GM10248 (cell line): ENCODE measurements at regions of chr7 and their contacts with region 1.

Region 1: DNA sequence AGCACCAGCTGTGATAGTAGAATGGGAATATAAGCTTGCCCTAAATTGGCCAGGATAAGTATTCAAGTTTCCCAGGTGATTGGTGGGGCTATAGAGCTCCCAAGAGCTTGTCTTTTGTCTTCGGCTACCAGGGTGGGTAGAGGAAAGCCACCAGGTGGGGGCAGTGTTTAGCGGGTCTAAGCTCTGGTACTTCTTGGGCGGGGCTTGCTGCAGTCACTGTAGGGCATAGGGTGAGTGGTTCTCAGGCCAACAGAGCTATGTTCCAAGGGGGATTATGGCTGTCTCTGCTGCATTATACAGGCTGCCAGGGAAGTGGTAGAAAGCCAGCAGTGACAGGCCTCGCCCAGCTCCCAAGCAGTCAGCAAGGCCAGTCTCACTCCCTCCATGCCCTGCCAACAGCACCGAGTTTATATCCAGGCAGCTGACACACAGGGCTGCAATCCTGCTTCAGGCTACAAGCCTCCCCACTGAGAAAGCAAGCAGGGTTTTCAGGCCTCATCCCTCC is 110.7 kb downstream of the ZNF467 start:
- DNase-seq: peak; percentile 66
- CTCF ChIP-seq: peak; percentile 63

Region 2: DNA sequence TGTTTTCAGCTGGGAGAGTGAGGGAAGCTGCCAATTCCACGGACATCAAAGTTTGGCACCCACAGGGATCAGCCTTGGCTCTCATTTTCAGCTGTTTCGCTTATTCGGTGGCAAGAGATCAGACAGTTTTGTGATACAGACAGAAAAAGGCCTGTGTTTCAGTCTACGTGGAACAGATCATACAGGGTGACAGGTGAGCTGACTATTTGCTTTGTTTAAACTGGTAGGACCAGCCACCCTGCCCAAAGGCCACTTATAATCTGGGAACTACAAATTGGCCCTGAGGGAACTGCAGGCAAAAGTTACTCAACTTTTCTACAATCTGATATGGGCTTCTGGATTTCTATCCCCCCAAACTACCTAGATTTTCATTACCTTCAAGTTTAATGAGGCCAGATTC is 17.9 kb before region 1 on chr7:
- CTCF ChIA-PET with region 1: interaction called, 18 read pairs
- POLR2A ChIA-PET with region 1: no interaction called
- DNase-seq: no peak
- CTCF ChIP-seq: no peak

Region 3: DNA sequence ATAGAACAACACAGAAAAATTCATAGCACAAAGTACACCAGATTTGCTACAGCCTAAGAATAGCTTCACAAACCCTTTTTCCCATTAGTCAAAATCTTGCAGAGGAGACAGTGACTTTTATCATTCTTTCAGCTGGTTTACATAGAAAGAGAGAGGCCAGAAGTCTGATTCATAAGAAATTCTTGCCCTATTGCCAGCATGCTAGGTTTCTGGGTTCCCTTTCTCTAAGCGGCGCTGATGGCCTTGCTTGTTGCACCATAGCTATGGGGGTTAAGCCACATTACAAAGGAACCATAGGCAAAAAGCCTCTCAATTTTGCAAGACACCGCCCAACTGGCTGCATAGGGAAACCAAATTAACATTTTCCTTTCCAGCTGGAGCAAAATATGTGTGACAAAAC is 23.4 kb after region 1 on chr7:
- CTCF ChIA-PET with region 1: interaction called, 49 read pairs
- POLR2A ChIA-PET with region 1: no interaction called
- DNase-seq: no peak
- CTCF ChIP-seq: no peak

Region 4: DNA sequence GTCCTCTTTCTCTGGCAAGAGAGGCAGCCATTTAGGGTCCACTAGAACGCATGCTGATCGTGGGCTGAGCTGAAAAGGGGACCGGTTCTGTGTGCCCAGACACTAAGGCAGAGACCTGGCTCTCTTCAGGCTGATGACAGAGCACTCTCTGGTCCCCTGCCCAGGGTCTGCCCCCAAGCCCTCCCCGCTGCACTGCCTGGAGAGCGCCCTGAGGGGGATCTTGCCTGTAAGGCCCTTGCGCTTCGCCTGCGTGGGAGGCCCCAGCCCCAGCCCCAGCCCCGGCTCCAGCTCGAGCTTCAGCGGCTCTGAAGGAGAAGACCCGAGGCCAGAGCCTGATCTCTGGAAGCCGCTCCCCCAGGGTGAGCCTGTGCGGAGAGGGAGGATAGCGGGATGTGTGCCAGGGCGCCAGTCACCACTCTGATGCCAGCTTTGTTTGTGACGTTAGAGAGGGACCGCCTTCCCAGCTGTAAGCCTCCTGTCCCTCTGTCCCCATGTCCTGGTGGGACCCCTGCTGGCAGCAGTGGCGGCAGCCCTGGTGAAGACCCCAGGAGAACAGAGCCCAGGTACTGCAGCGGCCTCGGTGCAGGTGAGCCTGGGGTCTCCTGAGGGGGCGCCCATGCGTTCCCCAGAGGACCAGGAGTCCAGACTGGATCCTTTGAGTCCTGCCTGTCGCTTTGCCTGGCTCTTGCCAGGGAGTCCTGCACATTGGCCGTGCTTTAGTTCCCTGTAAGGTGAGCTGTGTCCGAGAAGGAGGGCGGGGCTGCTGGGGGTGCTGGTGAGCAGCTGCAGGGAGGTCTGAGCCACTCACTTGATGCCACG is 67.5 kb after region 1 on chr7:
- CTCF ChIA-PET with region 1: interaction called, 18 read pairs
- POLR2A ChIA-PET with region 1: no interaction called
- DNase-seq: no peak
- CTCF ChIP-seq: no peak

Region 5: DNA sequence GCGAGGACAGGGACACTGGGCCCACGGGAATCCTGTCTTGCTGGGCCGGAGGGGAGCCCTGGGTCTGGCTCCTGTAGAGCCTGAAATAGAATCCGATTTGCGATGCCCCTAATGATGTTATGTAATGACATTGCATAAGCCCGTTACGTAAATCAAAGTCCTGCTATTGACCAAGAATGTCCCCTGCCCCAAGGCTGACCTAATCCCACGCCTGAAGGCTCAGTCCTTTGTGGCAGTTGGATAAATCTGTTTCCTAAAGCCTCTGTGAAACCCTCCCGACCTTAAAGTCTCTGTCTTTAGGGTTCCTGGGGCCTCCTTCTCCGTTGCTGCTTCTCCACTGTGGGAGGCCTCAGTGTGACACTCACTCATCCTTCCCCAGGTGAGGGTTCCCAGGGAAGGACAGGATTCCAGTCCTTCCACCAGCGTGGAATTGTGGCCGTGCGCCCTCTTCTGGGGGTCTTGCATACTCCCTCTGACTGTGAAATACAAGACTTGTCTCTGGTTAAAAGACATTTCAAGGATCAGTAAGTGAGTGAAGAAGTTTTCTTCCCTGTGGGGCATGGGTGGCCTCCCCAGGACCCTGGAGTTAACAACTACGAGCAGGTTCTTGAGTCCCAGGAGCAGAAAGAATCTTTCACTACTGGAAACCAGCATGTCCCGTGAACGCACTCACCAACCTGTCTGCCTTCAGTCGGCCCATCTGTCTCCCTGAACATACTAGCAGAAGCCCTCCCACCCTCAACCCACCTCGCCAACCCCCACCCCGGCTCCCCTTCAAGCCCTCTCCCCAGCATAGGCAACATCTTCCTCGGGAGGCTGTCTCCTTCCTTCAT is 91.0 kb after region 1 on chr7:
- CTCF ChIA-PET with region 1: interaction called, 251 read pairs
- POLR2A ChIA-PET with region 1: no interaction called
- DNase-seq: no peak
- CTCF ChIP-seq: peak; percentile 21